ENCODE measurements at regions of chr5 and their contacts with region 1.

Region 1: DNA sequence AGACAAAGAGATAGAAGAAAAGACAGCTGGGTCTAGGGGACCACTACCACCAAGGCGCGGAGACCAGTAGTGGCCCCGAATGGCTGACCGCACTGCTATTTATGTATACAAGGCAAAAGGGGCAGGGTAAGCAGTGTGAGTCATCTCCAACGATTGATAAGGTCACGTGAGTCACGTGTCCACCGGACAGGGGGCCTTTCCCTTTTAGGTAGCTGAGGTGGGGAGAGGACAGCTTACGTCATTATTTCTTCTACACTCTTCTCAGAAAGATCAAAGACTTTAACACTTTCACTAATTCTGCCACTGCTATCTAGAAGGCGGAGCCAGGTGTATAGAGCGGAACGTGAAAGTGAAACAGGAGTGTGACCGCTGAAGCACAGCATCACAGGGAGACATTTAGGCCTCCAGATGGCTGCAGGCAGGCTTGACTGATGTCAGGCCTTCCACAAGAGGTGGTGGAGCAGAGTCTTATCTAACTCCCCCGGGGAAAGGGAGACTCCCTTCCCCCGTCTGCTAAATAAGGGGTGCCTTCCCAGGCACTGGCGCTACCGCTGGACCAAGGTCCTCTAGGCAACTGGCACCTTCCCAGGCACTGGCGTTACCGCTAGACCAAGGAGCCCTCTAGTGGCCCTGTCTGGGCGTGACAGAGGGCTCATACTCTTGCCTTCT is 6.1 kb upstream of the PRR16 start:
- DNase-seq: peak; percentile 69 to 70
- H3K4me3 ChIP-seq: peak overlapping the region; percentile 11
- H3K4me3 Mint-ChIP-seq: peak overlapping the region; percentile 68
- H3K27ac Mint-ChIP-seq: no peak overlapping the region
- H3K4me1 ChIP-seq: no peaks in the 10 kb centered on the region
- H3K4me1 Mint-ChIP-seq: peaks cover 5% of the 10 kb centered on the region
- H3K27me3 ChIP-seq: no peaks in the 10 kb centered on the region
- H3K27me3 Mint-ChIP-seq: peaks cover 6% of the 10 kb centered on the region
- CTCF ChIP-seq: peak; percentile 70 to 78

Region 2: DNA sequence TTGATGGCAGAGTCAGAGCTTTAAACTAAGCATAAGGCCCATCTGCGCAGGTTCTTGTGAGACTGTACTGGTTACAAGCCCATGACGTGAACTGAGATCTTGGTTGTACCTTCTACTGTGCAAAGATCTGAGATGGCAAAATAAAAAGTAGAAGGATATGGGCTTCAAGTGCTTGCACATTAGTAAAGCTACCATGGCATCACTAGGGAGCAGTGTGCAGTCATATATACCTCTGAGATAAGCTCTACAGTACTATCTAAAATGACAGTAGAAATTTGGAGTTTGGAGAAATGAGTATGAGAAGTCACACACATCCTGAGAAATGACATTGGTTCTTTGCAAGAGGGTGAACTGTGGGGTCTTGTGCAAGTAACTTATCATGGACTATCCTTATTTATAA is 402.1 kb before region 1 on chr5:
- CTCF ChIA-PET with region 1: interaction called, 4 read pairs
- POLR2A ChIA-PET with region 1: no interaction called
- intact Hi-C with region 1: loop called (anchors 1 kb)
- DNase-seq: no peak
- H3K4me3 ChIP-seq: no peak overlapping the region
- H3K4me3 Mint-ChIP-seq: no peak overlapping the region
- H3K27ac Mint-ChIP-seq: no peak overlapping the region
- H3K4me1 ChIP-seq: no peaks in the 10 kb centered on the region
- H3K4me1 Mint-ChIP-seq: no peaks in the 10 kb centered on the region
- H3K27me3 ChIP-seq: no peaks in the 10 kb centered on the region
- H3K27me3 Mint-ChIP-seq: peaks cover 1% of the 10 kb centered on the region
- CTCF ChIP-seq: no peak

Measured in Caco-2 (cell line).